B cell (primary cell): ENCODE measurements at regions of chr5 and their contacts with region 1.

Region 1: DNA sequence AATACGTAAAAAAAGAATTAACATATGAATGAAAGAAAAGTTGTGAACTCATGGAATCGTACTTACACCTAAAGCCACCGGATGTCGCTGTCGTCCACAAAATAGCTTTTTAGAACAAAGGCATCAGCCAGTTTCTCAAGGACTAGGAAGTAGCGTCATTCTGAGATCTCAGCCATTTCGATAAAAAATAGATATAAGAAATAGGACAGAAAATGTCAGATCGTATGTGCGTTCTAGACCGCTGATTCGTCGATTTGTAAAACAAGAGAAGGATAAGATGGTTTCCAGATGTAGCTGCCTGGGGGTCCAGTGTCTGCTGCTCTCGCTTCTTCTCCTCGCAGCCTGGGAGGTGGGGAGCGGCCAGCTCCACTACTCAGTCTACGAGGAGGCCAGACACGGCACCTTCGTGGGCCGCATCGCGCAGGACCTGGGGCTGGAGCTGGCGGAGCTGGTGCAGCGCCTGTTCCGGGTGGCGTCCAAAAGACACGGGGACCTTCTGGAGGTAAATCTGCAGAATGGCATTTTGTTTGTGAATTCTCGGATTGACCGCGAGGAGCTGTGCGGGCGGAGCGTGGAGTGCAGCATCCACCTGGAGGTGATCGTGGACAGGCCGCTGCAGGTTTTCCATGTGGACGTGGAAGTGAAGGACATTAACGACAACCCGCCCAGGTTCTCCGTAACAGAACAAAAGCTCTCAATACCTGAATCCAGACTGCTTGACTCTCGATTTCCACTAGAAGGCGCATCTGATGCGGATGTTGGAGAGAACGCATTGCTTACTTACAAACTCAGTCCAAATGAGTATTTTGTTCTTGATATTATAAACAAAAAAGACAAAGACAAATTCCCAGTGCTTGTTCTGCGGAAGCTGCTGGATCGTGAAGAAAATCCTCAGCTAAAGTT is at the start of gene PCDHA10:
- DNase-seq: no peak
- ATAC-seq: no peak
- H3K4me3 ChIP-seq: no peak within 1 kb of the TSS
- H3K4me3 Mint-ChIP-seq: no peak within 1 kb of the TSS
- H3K27ac ChIP-seq: no peak within 1 kb of the TSS
- H3K27ac Mint-ChIP-seq: no peak within 1 kb of the TSS
- H3K4me1 ChIP-seq: no peaks in the 10 kb centered on the region
- H3K4me1 Mint-ChIP-seq: no peaks in the 10 kb centered on the region
- H3K27me3 ChIP-seq: peaks cover 0 to 12% (median 5%) of the 10 kb centered on the region in 4 experiments
- H3K27me3 Mint-ChIP-seq: peaks cover 2% of the 10 kb centered on the region
- CTCF ChIP-seq: no peak
- total RNA-seq, gene PCDHA10: not detected in 2 replicates

Region 2: DNA sequence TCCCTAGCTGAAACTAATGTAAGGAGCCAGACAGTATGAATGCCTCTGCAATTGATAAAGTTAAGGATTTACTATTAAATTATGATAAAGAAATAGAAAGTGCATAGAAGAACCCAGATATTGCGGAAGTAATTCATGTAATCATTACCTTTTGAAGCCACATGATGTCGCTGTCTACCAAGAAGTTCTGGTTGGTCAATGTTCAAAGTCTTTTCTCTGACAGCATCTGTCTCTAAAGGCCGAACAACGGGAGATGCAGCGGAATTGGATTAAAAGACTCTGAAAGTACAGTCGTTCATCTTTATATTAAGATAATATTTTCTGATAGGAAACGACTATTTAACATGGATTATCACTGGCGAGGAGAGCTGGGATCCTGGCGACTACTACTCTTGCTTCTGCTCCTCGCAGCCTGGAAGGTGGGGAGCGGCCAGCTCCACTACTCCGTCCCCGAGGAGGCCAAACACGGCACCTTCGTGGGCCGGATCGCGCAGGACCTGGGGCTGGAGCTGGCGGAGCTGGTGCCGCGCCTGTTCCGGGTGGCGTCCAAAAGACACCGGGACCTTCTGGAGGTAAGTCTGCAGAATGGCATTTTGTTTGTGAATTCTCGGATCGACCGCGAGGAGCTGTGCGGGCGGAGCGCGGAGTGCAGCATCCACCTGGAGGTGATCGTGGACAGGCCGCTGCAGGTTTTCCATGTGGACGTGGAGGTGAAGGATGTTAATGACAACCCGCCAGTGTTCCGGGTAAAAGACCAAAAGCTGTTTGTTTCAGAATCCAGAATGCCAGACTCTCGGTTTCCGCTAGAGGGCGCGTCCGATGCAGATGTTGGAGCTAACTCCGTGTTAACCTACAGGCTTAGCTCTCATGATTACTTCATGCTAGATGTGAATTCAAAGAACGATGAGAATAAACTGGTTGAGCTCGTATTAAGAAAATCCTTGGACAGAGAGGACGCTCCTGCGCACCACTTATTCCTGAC is 14.8 kb before region 1 on chr5 and contains the start of gene PCDHA8:
- CTCF ChIA-PET with region 1: interaction called, 5 read pairs
- POLR2A ChIA-PET with region 1: no interaction called
- intact Hi-C with region 1: loop called (anchors 1 kb)
- DNase-seq: no peak
- ATAC-seq: no peak
- H3K4me3 ChIP-seq: no peak within 1 kb of the TSS
- H3K4me3 Mint-ChIP-seq: no peak within 1 kb of the TSS
- H3K27ac ChIP-seq: no peak within 1 kb of the TSS
- H3K27ac Mint-ChIP-seq: no peak within 1 kb of the TSS
- H3K4me1 ChIP-seq: no peaks in the 10 kb centered on the region
- H3K4me1 Mint-ChIP-seq: no peaks in the 10 kb centered on the region
- H3K27me3 ChIP-seq: peaks cover 0 to 7% (median 1%) of the 10 kb centered on the region in 4 experiments
- H3K27me3 Mint-ChIP-seq: peaks cover 12% of the 10 kb centered on the region
- CTCF ChIP-seq: no peak
- total RNA-seq, gene PCDHA8: not detected in 2 replicates

Region 3: DNA sequence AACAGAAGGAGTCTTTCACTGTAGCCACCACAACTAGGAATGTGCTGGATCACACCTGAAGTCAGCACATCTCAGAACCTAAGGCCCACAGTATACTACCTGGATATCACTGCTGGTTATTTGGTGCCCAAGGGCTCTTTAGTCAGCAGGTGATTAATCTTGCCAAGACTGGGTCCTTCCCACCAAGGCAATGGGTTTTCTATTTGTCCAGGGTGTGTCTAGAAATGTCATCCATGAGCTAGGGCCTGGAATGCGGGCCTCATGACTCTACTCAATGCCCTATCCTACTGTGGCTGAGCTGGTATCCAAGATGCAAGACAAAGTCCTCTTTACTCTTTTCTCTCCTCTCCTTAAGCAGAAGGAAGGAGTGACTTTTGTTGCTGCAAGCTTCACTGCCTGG is 60.3 kb after region 1 on chr5:
- CTCF ChIA-PET with region 1: no interaction called
- POLR2A ChIA-PET with region 1: no interaction called
- intact Hi-C with region 1: no loop called
- DNase-seq: no peak
- ATAC-seq: no peak
- H3K4me3 ChIP-seq: no peak overlapping the region
- H3K4me3 Mint-ChIP-seq: no peak overlapping the region
- H3K27ac ChIP-seq: no peak overlapping the region
- H3K27ac Mint-ChIP-seq: no peak overlapping the region
- H3K4me1 ChIP-seq: no peaks in the 10 kb centered on the region
- H3K4me1 Mint-ChIP-seq: no peaks in the 10 kb centered on the region
- H3K27me3 ChIP-seq: no peaks in the 10 kb centered on the region
- H3K27me3 Mint-ChIP-seq: peaks cover 4% of the 10 kb centered on the region
- CTCF ChIP-seq: no peak

Region 4: DNA sequence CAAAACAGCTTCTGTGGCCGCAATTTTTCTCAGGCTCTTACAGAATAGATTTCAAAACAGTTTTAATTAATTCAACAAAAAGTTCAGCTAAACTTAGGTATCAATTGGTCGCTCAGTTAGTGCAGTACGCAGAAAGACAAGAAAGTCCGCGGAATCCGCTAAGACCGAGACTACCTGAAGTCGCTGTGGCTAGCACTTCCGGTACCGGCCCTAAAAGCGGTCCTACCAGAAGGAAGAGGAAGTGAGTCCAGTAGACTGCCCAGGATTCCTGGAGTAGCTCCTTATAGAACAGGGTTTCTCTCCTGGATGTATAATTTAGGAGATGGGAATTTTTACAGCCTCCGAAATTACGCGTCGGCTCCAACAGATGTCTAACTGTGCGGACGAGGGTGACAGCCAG is 221.8 kb after region 1 on chr5:
- CTCF ChIA-PET with region 1: no interaction called
- POLR2A ChIA-PET with region 1: no interaction called
- intact Hi-C with region 1: no loop called
- DNase-seq: no peak
- ATAC-seq: no peak
- H3K4me3 ChIP-seq: no peak overlapping the region
- H3K4me3 Mint-ChIP-seq: no peak overlapping the region
- H3K27ac ChIP-seq: no peak overlapping the region
- H3K27ac Mint-ChIP-seq: no peak overlapping the region
- H3K4me1 ChIP-seq: no peaks in the 10 kb centered on the region
- H3K4me1 Mint-ChIP-seq: no peaks in the 10 kb centered on the region
- H3K27me3 ChIP-seq: no peaks in the 10 kb centered on the region
- H3K27me3 Mint-ChIP-seq: peaks cover 8% of the 10 kb centered on the region
- CTCF ChIP-seq: no peak

Region 5: DNA sequence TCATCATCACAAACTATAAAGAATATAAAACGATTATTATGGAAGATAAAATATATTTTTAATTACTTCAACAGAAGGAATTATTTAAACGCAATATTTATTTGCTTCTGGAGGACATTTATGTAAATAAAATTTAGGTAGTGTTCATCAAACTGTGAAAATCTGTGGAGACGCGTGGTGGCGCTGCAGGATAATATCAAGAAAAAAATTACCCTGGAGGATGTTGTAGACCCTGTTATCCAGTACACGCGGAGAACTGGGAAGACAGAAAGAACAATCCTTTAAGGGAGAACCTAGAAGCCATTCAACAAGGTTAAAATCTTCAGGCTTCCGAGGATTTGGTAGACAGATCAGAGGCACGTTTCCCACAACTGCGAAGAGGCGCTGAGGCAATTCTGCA is 352.5 kb after region 1 on chr5 and contains the start of gene PCDHB12:
- CTCF ChIA-PET with region 1: no interaction called
- POLR2A ChIA-PET with region 1: no interaction called
- intact Hi-C with region 1: no loop called
- DNase-seq: no peak
- ATAC-seq: no peak
- H3K4me3 ChIP-seq: no peak within 1 kb of the TSS
- H3K4me3 Mint-ChIP-seq: no peak within 1 kb of the TSS
- H3K27ac ChIP-seq: no peak within 1 kb of the TSS
- H3K27ac Mint-ChIP-seq: no peak within 1 kb of the TSS
- H3K4me1 ChIP-seq: no peaks in the 10 kb centered on the region
- H3K4me1 Mint-ChIP-seq: no peaks in the 10 kb centered on the region
- H3K27me3 ChIP-seq: peaks cover 0 to 19% (median 12%) of the 10 kb centered on the region in 4 experiments
- H3K27me3 Mint-ChIP-seq: peaks cover 45% of the 10 kb centered on the region
- CTCF ChIP-seq: no peak
- total RNA-seq, gene PCDHB12: not detected in 2 replicates